ENCODE measurements at regions of chr7 and their contacts with region 1.

Region 1: DNA sequence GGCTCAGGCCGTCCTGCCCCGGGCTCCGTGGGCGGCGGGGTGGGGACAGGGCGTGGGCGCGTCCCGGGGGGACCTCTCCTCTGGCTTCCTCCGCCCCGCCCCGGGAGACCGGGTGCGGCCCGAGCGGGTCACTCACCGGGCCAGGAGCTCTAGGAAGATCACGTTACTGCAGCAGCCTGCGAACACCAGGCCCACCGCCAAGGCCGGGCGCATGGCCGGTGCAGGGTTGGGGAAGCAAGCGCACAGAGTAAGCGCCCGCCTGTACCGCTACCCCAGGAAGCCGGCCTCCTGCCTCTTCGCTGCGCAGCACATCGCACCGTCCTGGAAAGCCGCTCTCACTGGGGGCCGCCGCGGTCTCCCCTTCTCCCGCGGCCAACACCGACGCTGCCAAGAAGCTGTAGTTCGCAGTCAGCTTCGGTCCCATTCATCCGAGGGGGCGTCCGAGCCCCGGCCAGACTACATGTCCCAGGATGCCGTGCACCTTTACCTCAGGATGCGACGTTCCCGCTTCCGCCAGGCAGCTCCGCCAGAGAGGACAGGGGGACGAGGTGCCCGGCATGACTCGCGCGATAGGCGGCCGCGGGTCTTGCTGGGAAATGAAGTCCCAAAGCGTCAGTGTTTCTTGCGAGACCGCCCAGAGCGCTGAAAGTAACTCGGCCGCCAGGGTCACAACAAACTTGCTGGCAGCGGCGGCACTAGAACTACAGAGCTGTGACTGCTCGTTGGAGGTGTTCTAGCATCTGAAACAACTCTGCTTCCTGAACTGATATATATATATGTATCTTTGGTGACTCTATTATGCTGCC is at the start of gene SLC35B4:
- DNase-seq: peak; percentile 89
- ATAC-seq: peak; percentile 97
- H3K4me3 Mint-ChIP-seq: peak within 1 kb of the TSS; percentile 94
- H3K27ac Mint-ChIP-seq: peak within 1 kb of the TSS; percentile 87
- H3K4me1 Mint-ChIP-seq: peaks cover 14% of the 10 kb centered on the region
- H3K27me3 Mint-ChIP-seq: peaks cover 4% of the 10 kb centered on the region
- CTCF ChIP-seq: no peak
- total RNA-seq, gene SLC35B4: 17.1 and 22.0 TPM in 2 replicates

Region 2: DNA sequence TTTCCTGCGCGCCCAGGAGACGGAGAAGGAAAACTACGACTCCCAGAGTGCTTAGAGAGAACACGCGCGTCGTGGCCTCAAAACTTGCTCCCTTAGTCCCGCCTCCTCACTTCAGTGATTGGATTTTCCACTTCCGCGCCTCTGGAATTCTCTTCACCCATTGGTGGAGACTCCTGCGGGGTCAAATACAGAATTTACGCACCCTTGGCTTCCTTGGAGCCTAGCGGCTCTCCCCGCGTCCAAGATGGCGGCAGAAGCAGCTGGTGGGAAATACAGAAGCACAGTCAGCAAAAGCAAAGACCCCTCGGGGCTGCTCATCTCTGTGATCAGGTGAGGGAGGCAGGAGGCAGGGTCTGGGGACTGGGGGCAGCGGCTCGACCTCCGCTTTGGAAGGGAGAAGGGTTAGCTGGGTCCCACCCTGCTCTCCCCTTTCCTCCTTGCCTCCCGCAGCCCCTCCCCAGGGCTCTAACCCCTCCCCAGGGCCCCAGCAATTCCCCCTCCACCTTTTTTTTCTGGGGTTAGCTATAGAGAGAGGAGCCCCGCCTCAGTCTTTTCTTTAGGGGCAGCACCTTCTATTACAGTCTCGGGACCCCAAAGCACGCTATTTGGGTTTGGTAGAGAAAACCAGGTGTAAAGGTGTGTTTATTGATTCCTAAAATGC is 1063.8 kb before region 1 on chr7 and contains the start of gene EXOC4:
- CTCF ChIA-PET with region 1: no interaction called
- POLR2A ChIA-PET with region 1: no interaction called
- intact Hi-C with region 1: loop called (anchors 1 kb)
- DNase-seq: peak; percentile 67
- ATAC-seq: peak; percentile 100
- H3K4me3 Mint-ChIP-seq: peak within 1 kb of the TSS; percentile 95
- H3K27ac Mint-ChIP-seq: peak within 1 kb of the TSS; percentile 88
- H3K4me1 Mint-ChIP-seq: peaks cover 27% of the 10 kb centered on the region
- H3K27me3 Mint-ChIP-seq: no peaks in the 10 kb centered on the region
- CTCF ChIP-seq: no peak
- total RNA-seq, gene EXOC4: 89.1 and 103 TPM in 2 replicates

Region 3: DNA sequence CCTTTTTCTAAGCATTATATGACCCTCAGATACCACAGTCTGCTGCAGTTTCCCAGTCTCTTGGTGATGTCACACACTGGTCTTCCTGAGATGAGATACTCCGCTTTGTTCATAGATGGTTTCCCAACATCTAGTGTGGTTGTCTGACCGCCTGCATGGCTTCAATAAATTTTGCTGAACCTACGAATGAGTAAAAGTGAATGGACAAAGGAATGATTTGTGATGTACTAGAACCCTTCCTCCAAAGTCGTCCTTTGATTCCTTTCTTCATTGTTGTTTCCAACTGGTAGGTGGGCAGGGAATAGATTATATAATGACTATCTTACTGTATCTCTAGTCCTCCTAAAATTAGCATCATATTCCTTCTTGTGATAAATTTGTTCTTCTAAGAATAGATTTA is 82.5 kb before region 1 on chr7:
- CTCF ChIA-PET with region 1: no interaction called
- POLR2A ChIA-PET with region 1: no interaction called
- intact Hi-C with region 1: no loop called
- DNase-seq: no peak
- ATAC-seq: no peak
- H3K4me3 Mint-ChIP-seq: no peak overlapping the region
- H3K27ac Mint-ChIP-seq: no peak overlapping the region
- H3K4me1 Mint-ChIP-seq: no peaks in the 10 kb centered on the region
- H3K27me3 Mint-ChIP-seq: peaks cover 21% of the 10 kb centered on the region
- CTCF ChIP-seq: no peak

Region 4: GRCh38 chr7:134293002-134293740 is 23.6 kb before region 1 on chr7:
- CTCF ChIA-PET with region 1: no interaction called
- POLR2A ChIA-PET with region 1: interaction called, 7 read pairs
- intact Hi-C with region 1: loop called (anchors 1 kb)
- DNase-seq: no peak
- ATAC-seq: peak; percentile 99
- H3K4me3 Mint-ChIP-seq: no peak overlapping the region
- H3K27ac Mint-ChIP-seq: peak overlapping the region; percentile 54
- H3K4me1 Mint-ChIP-seq: peaks cover 20% of the 10 kb centered on the region
- H3K27me3 Mint-ChIP-seq: no peaks in the 10 kb centered on the region
- CTCF ChIP-seq: no peak

Region 5: DNA sequence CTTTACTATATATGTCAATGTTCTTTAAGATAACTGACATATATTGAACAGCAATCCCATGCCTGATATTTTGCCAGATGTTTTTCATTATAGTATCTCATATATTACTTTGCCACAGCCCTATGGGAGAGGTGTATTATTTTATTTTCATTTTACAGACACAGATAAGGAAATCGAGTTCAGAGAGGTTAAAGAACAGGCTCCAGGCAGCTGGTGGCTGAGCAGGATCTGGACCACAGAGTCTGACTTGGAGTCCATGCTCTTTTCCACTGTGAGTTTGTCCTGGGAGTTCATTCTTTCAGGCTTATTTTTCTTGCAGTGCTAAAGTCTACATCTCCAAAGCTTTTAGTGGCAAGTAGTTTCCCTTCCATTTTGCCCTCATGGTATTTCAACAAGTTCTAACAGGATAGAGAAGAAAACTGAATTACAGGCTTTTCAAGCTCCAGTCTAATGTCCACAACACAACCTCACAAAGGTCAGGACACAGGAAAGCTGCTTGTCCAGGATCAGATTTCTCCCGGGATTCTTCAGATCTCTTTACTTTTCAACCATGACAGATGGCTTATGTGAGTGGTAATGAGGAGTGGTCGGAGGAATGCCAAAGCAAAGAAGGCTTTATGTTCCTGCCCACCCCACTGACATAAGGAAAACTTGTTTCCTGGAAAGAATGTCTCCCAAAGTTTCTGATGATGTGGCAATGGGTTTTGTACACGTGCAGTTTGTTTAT is 13.0 kb after region 1 on chr7:
- CTCF ChIA-PET with region 1: no interaction called
- POLR2A ChIA-PET with region 1: no interaction called
- intact Hi-C with region 1: no loop called
- DNase-seq: no peak
- ATAC-seq: no peak
- H3K4me3 Mint-ChIP-seq: no peak overlapping the region
- H3K27ac Mint-ChIP-seq: no peak overlapping the region
- H3K4me1 Mint-ChIP-seq: no peaks in the 10 kb centered on the region
- H3K27me3 Mint-ChIP-seq: peaks cover 21% of the 10 kb centered on the region
- CTCF ChIP-seq: no peak

Region 6: GRCh38 chr7:134766779-134767519 is 450.2 kb after region 1 on chr7:
- CTCF ChIA-PET with region 1: no interaction called
- POLR2A ChIA-PET with region 1: interaction called, 12 read pairs
- intact Hi-C with region 1: no loop called
- DNase-seq: peak; percentile 27
- ATAC-seq: peak; percentile 90
- H3K4me3 Mint-ChIP-seq: peak overlapping the region; percentile 55
- H3K27ac Mint-ChIP-seq: peak overlapping the region; percentile 89
- H3K4me1 Mint-ChIP-seq: peaks cover 33% of the 10 kb centered on the region
- H3K27me3 Mint-ChIP-seq: no peaks in the 10 kb centered on the region
- CTCF ChIP-seq: no peak

Region 7: GRCh38 chr7:135558337-135558767 is 1241.6 kb after region 1 on chr7:
- CTCF ChIA-PET with region 1: no interaction called
- POLR2A ChIA-PET with region 1: no interaction called
- intact Hi-C with region 1: loop called (anchors 5 kb)
- DNase-seq: peak; percentile 46
- ATAC-seq: peak; percentile 56
- H3K4me3 Mint-ChIP-seq: no peak overlapping the region
- H3K27ac Mint-ChIP-seq: no peak overlapping the region
- H3K4me1 Mint-ChIP-seq: peaks cover 16% of the 10 kb centered on the region
- H3K27me3 Mint-ChIP-seq: no peaks in the 10 kb centered on the region
- CTCF ChIP-seq: peak; percentile 29